ENCODE measurements at regions of chr2 and their contacts with region 1.

Region 1: DNA sequence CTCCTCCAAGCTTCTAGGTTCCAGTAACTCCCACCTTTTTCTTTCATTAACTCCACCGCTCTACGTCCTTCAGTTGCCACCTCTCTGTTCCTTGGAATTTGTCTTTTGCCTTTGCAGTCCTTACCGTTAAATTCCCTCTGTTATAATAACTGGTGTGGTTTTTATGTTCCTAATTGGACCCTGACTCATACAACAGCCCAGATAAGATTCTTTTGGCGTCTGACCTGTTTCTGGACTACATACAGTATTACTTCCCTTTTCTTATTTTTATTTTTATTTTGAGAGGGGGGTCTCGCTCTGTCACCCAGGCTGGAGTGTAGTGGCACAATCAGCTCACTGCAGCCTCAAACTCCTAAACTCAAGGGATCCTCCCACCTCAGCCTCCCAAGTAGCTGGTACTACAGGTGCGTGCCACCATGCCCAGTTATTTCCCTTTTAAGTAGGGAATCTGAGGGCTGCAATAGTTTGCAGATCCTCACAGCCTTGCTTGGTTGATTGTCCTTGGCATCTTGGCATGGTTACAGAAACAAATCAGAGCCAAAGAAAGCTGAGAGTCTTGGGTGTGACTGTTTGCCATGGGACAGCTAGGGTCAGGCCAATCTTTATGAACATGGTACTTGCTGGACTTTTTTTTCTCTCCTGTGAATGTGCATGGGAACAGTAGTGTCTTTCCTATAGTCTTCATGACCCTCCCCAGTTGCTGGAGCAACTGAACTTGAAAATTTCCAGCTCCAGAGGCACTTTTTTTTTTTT is 22.0 kb downstream of the TCF23 start:
- DNase-seq: no peak
- ATAC-seq: no peak
- H3K4me3 ChIP-seq: no peak overlapping the region
- H3K4me3 Mint-ChIP-seq: peak overlapping the region; percentile 55
- H3K27ac ChIP-seq: no peak overlapping the region
- H3K27ac Mint-ChIP-seq: no peak overlapping the region
- H3K4me1 ChIP-seq: peaks cover 7 to 10% of the 10 kb centered on the region in 2 donors
- H3K4me1 Mint-ChIP-seq: peaks cover 7% of the 10 kb centered on the region
- H3K27me3 ChIP-seq: peaks cover 0 to 3% (median 0%) of the 10 kb centered on the region in 4 experiments
- H3K27me3 Mint-ChIP-seq: no peaks in the 10 kb centered on the region
- CTCF ChIP-seq: no peak

Region 2: GRCh38 chr2:27152102-27152785 is 18.5 kb before region 1 on chr2:
- CTCF ChIA-PET with region 1: interaction called, 10 read pairs
- POLR2A ChIA-PET with region 1: no interaction called
- intact Hi-C with region 1: no loop called
- DNase-seq: no peak
- ATAC-seq: no peak
- H3K4me3 ChIP-seq: no peak overlapping the region
- H3K4me3 Mint-ChIP-seq: no peak overlapping the region
- H3K27ac ChIP-seq: no peak overlapping the region
- H3K27ac Mint-ChIP-seq: no peak overlapping the region
- H3K4me1 ChIP-seq: no peaks in the 10 kb centered on the region
- H3K4me1 Mint-ChIP-seq: no peaks in the 10 kb centered on the region
- H3K27me3 ChIP-seq: peaks cover 0 to 7% (median 0%) of the 10 kb centered on the region in 4 experiments
- H3K27me3 Mint-ChIP-seq: peaks cover 9% of the 10 kb centered on the region
- CTCF ChIP-seq: no peak

Measured in B cell (primary cell).